PC-9 (cell line): ENCODE measurements at regions of chr6 and their contacts with region 1.

Region 1: GRCh38 chr6:44662461-44663121 is 275.1 kb downstream of the CDC5L start:
- DNase-seq: peak in 1 of 2 experiments; percentile 81
- H3K4me3 ChIP-seq: no peak overlapping the region
- H3K27ac ChIP-seq: no peak overlapping the region
- H3K4me1 ChIP-seq: peaks cover 30% of the 10 kb centered on the region
- H3K27me3 ChIP-seq: no peaks in the 10 kb centered on the region
- CTCF ChIP-seq: no peak

Region 2: GRCh38 chr6:44246663-44247337 is 415.8 kb before region 1 on chr6 and contains the start of gene HSP90AB1:
- CTCF ChIA-PET with region 1: no interaction called
- POLR2A ChIA-PET with region 1: no interaction called
- intact Hi-C with region 1: no loop called
- DNase-seq: peak; percentile 94 to 97
- H3K4me3 ChIP-seq: peak within 1 kb of the TSS; percentile 98
- H3K27ac ChIP-seq: peak within 1 kb of the TSS; percentile 94
- H3K4me1 ChIP-seq: peaks cover 35% of the 10 kb centered on the region
- H3K27me3 ChIP-seq: no peaks in the 10 kb centered on the region
- CTCF ChIP-seq: no peak
- total RNA-seq, gene HSP90AB1: 895 and 1,136 TPM in 2 replicates

Region 3: GRCh38 chr6:44674351-44675155 is 12.0 kb after region 1 on chr6:
- CTCF ChIA-PET with region 1: interaction called, 3 read pairs
- POLR2A ChIA-PET with region 1: interaction called, 7 read pairs
- intact Hi-C with region 1: loop called (anchors 1 kb)
- DNase-seq: peak; percentile 66 to 71
- H3K4me3 ChIP-seq: no peak overlapping the region
- H3K27ac ChIP-seq: peak overlapping the region; percentile 46
- H3K4me1 ChIP-seq: peaks cover 44% of the 10 kb centered on the region
- H3K27me3 ChIP-seq: no peaks in the 10 kb centered on the region
- CTCF ChIP-seq: no peak

Region 4: DNA sequence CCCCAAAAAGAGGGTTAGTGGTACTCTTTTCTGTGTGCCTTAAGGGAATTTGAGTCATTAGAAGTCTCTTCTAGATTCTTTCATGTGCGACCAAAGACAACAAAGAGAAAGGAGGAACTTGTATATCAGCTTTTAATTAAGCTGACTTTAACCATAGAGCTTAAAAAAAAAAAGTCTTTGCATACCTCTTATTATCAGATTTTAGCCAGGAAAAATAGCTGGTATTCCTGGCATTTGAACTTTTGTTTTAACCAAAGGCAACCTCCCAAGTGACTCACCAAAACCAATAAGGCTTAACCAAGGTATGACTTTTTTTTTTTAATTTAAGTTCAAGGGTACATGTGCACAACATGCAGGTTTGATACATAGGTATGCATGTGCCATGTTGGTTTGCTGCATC is 99.9 kb after region 1 on chr6:
- CTCF ChIA-PET with region 1: no interaction called
- POLR2A ChIA-PET with region 1: no interaction called
- intact Hi-C with region 1: loop called (anchors 2 kb)
- DNase-seq: peak; percentile 5 to 63
- H3K4me3 ChIP-seq: no peak overlapping the region
- H3K27ac ChIP-seq: no peak overlapping the region
- H3K4me1 ChIP-seq: no peaks in the 10 kb centered on the region
- H3K27me3 ChIP-seq: no peaks in the 10 kb centered on the region
- CTCF ChIP-seq: no peak

Region 5: DNA sequence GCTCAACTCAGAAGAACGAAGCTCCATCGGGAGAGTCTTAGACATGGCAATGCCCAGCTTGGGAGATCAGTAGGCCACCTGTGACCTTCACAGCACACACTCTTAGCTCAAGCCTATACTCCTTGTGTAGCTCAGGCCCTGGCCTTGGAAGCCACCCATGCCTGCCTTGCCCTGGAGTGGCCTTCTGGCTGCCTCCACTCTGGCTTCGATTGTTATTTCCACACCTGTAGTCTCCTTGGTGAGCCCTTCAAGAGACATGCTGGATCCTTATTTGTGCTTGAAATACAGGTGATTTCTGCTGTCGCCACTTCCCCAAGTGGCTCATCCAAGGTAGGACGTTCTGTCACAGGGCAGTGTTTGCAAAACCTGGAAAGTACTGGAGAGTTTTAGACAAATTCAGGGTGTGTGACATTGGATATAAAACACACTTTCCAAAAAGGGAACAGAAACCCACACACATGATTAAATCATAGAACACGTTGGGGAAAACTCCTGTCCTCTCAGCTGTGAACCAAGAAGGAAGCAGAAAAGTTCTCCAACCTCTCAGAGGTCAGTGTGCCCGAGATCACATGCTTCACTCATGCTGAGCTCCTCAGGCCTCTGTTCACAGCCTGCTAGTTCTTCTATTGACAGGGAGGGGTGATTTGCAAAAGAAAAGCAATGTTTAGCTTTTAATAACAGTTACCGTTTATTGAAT is 116.7 kb after region 1 on chr6:
- CTCF ChIA-PET with region 1: no interaction called
- POLR2A ChIA-PET with region 1: no interaction called
- intact Hi-C with region 1: no loop called
- DNase-seq: no peak
- H3K4me3 ChIP-seq: no peak overlapping the region
- H3K27ac ChIP-seq: no peak overlapping the region
- H3K4me1 ChIP-seq: no peaks in the 10 kb centered on the region
- H3K27me3 ChIP-seq: no peaks in the 10 kb centered on the region
- CTCF ChIP-seq: no peak

Region 6: DNA sequence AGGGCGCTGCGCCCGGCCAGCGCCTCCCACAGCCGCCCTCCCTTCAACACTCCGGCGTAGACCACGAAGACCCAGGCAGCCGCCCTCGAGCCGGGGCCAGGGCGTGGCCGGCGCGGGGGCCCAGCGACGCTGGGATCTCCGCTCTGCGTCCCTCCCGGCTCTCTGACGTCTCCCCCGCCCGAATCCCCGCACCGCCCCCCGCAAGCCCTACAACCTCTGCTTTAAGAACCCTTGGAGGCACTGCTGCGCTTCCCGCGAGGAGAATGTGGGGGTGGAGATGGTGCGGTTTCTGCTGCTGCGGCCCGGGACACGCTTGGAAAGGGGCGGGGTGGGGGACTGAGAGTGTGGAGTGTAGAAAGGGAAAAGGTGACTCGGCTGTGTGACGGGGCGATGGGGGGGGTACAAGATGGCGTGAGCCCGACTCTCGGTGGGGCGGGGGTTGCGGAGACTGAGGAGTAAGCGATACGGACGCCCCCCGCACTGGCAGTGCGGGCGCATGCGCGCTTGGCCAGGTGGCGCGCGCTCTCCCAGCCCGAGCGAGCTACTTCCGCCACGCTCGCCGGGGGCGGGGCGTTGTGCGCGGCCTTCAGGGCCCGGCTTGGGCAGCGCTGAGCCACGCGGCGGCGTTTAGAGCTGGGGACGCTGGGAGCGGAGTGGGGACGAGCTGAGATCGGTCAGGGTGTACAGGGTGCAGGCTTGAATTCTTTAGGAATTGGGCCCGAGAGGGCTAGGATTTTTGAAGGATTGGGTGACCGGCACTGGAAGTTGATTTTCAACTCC is 715.2 kb after region 1 on chr6 and contains the start of gene SUPT3H:
- CTCF ChIA-PET with region 1: no interaction called
- POLR2A ChIA-PET with region 1: interaction called, 3 read pairs
- intact Hi-C with region 1: loop called (anchors 5 kb)
- DNase-seq: peak; percentile 76 to 89
- H3K4me3 ChIP-seq: peak within 1 kb of the TSS; percentile 93
- H3K27ac ChIP-seq: peak within 1 kb of the TSS; percentile 94
- H3K4me1 ChIP-seq: peaks cover 8% of the 10 kb centered on the region
- H3K27me3 ChIP-seq: no peaks in the 10 kb centered on the region
- CTCF ChIP-seq: no peak
- total RNA-seq, gene SUPT3H: 9.0 and 9.2 TPM in 2 replicates